Psoas muscle (tissue), 8 donors: ENCODE measurements at regions of chr6 and their contacts with region 1.

Region 1: DNA sequence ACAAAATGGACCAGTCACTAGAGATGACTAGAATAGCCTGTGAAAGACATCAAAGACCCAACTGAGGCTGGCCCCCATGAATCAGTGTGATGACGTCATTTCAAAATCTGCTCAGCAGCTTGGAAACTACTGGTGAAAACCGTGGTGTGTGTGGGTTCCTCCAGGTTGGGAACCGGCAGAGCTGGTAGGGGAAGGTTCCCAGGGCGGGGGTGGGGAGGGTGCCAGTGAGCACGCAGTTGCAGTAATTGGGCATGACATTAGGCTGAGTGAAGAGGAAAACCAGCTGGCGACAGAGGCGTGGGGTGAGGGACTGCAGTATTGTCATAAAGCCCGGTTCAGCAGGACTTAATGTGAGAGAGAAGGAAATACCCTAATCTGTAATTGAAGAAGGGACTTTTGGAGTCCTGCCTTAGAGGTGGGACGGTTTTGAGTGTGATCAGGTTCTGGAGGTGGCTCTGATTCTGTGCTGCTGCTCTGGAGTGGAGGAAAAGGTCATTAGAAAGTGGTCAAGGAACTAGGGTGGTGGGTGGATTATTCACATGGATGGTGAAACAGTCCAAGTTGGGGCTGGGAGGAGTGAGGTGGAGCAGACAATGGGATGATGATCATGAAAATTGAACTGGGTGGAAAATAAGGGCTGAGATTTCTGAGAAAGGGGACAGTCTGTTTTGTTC is 52.0 kb upstream of the MTHFD1L start:
- DNase-seq: no peak
- ATAC-seq: peak in 1 of 4 donors; percentile 25
- H3K4me3 ChIP-seq: no peak overlapping the region
- H3K27ac ChIP-seq: no peak overlapping the region
- H3K4me1 ChIP-seq: no peaks in the 10 kb centered on the region
- H3K27me3 ChIP-seq: peaks cover 0 to 8% (median 0%) of the 10 kb centered on the region in 3 donors
- CTCF ChIP-seq: no peak

Region 2: DNA sequence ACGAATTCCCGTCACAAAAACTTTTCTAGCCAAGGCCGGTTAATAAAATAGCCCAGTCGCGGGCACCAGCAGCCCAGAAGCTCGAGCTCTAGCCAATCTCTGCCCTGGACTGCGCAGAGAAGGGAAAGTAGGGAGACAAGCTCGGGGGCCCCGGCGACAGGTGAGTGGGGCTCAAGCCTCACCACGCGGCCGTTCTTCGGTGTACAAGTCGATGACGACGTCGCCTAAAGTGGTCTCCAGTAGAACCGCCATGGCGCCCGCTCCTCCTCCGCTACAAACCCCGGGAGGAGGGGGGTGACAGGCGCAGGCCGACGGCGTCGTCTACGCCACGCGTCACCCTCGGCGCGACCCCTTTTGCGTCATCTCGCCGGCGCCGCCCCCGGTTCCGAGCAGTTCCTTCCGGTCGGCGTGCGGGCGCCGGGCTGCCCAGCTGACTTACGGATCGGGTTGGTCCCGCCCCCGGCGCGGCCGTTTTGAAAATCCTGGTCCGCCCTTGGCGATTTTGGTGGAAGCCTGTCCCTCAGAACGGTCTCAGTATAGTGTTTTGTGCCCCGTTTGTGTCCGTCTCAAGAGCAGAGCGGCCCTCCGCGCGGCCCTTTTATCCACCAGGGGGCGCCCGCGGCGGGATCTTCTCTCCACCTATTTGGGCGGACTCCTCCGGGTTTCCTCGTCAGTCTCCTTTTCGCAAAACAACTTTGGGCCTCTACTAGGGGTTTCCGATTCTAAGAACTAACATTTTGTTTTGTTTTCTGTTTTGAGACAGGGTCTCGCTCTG is 1267.5 kb before region 1 on chr6 and contains the start of gene PPIL4:
- intact Hi-C with region 1: no loop called
- DNase-seq: peak; percentile 98 to 99
- ATAC-seq: peak; percentile 98 to 99 (median 99)
- H3K4me3 ChIP-seq: peak within 1 kb of the TSS; percentile 96
- H3K27ac ChIP-seq: peak within 1 kb of the TSS; percentile 99
- H3K4me1 ChIP-seq: peaks cover 28% of the 10 kb centered on the region
- H3K27me3 ChIP-seq: no peaks in the 10 kb centered on the region
- CTCF ChIP-seq: peak; percentile 75
- total RNA-seq, gene PPIL4: 14.7 to 32.4 (median 22.3) TPM

Region 3: GRCh38 chr6:149934249-149935156 is 879.0 kb before region 1 on chr6:
- intact Hi-C with region 1: loop called in 1 of 2 experiments (anchors 5 kb)
- DNase-seq: peak in 1 of 2 donors; percentile 38
- ATAC-seq: peak; percentile 71 to 83 (median 75)
- H3K4me3 ChIP-seq: no peak overlapping the region
- H3K27ac ChIP-seq: no peak overlapping the region
- H3K4me1 ChIP-seq: no peaks in the 10 kb centered on the region
- H3K27me3 ChIP-seq: peaks cover 7 to 60% (median 26%) of the 10 kb centered on the region in 3 donors
- CTCF ChIP-seq: peak; percentile 90

Region 4: GRCh38 chr6:150072201-150072600 is 741.3 kb before region 1 on chr6:
- intact Hi-C with region 1: loop called in 1 of 2 experiments (anchors 10 kb)
- DNase-seq: peak; percentile 79 to 84
- ATAC-seq: peak; percentile 50 to 77 (median 68)
- H3K4me3 ChIP-seq: no peak overlapping the region
- H3K27ac ChIP-seq: no peak overlapping the region
- H3K4me1 ChIP-seq: peaks cover 6% of the 10 kb centered on the region
- H3K27me3 ChIP-seq: no peaks in the 10 kb centered on the region
- CTCF ChIP-seq: no peak

Region 5: DNA sequence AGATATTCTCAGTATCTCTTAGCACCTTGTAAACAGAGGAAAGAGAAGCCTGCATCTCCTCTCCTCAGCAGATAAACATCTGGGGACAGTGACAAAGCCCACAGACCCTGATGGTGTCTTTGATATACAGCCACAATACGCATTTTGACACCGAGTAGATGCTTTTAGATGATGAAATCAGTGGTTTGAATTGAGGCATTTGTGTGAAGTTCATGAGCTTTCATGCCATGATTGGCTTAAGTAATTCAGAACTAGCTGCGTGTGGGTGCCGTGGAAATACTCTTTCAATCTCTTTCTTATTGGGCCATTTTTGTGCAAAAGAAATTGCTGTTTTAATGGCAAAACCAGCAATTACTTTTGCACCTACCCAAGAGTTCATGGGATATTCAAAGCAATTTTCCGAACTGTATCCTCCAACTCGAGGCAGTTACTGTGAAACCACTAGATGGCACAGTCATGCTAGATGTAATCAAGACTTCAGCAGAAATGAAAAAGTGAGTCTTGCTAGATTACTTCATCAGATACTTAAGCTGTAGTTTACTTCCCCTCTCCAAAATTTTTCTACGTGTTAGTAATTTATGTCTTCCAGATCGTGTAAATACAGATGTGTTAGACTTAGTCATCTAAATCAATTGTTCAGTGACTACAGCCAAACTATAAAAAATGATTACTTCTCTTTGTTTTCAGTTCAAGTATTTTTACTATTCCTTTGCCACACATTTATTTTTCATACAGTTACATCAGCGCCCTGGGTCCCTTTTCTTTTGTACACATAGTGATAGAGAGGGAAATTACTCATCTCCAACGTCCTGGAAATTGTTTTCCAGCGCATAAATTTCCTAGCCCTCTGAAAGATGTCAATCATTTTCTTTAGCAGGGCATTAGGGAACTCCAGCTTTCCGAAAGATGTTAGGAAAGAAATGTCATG is 395.3 kb before region 1 on chr6:
- intact Hi-C with region 1: loop called (anchors 1 to 2 kb)
- DNase-seq: no peak
- ATAC-seq: peak; percentile 69 to 92 (median 80)
- H3K4me3 ChIP-seq: peak overlapping the region; percentile 51
- H3K27ac ChIP-seq: peak overlapping the region; percentile 56
- H3K4me1 ChIP-seq: no peaks in the 10 kb centered on the region
- H3K27me3 ChIP-seq: peaks cover 0 to 3% (median 0%) of the 10 kb centered on the region in 3 donors
- CTCF ChIP-seq: peak; percentile 76

Region 6: GRCh38 chr6:150600301-150601017 is 213.0 kb before region 1 on chr6:
- intact Hi-C with region 1: loop called in 1 of 2 experiments (anchors 5 kb)
- DNase-seq: peak; percentile 52 to 66
- ATAC-seq: peak; percentile 25 to 74 (median 54)
- H3K4me3 ChIP-seq: peak overlapping the region; percentile 71
- H3K27ac ChIP-seq: peak overlapping the region; percentile 69
- H3K4me1 ChIP-seq: no peaks in the 10 kb centered on the region
- H3K27me3 ChIP-seq: peaks cover 0 to 50% (median 0%) of the 10 kb centered on the region in 3 donors
- CTCF ChIP-seq: peak; percentile 33

Region 7: GRCh38 chr6:150641398-150642139 is 171.9 kb before region 1 on chr6:
- intact Hi-C with region 1: no loop called
- DNase-seq: no peak
- ATAC-seq: no peak
- H3K4me3 ChIP-seq: peak overlapping the region; percentile 40
- H3K27ac ChIP-seq: no peak overlapping the region
- H3K4me1 ChIP-seq: peaks cover 5% of the 10 kb centered on the region
- H3K27me3 ChIP-seq: no peaks in the 10 kb centered on the region
- CTCF ChIP-seq: no peak